AG04449 (cell line): ENCODE measurements at regions of chr9 and their contacts with region 1.

Region 1: GRCh38 chr9:122931226-122932121 is at the start of gene ZBTB26:
- DNase-seq: peak; percentile 50
- H3K4me3 ChIP-seq: peak within 1 kb of the TSS; percentile 96
- CTCF ChIP-seq: no peak

Region 2: DNA sequence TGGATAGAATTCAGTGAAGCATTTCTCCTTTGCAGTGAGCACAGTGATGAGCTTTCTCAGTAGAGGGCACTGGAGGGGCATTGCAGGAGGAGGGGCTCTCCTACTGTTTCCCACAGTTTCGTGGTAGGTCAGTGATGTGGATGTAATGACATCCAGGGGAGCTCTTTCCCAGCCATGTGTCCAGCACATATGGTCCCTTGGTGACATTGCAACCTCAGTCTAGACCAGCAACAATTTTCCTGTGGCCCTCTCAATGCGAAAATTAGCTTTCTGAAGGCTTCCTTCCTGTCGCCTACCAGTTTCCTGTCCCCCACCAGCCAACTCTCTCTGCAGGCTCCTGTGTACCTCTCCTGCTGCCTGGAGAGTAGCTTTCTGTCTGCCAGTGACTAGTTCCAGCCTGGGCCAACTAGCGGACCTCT is 96.2 kb before region 1 on chr9:
- CTCF ChIA-PET with region 1: no interaction called
- POLR2A ChIA-PET with region 1: no interaction called
- DNase-seq: no peak
- H3K4me3 ChIP-seq: no peak overlapping the region
- CTCF ChIP-seq: no peak

Region 3: GRCh38 chr9:122912964-122913673 is 18.4 kb before region 1 on chr9 and contains the start of gene ZBTB6:
- CTCF ChIA-PET with region 1: interaction called, 4 read pairs
- POLR2A ChIA-PET with region 1: interaction called, 15 read pairs
- DNase-seq: peak; percentile 16
- H3K4me3 ChIP-seq: peak within 1 kb of the TSS; percentile 85
- CTCF ChIP-seq: no peak

Region 4: DNA sequence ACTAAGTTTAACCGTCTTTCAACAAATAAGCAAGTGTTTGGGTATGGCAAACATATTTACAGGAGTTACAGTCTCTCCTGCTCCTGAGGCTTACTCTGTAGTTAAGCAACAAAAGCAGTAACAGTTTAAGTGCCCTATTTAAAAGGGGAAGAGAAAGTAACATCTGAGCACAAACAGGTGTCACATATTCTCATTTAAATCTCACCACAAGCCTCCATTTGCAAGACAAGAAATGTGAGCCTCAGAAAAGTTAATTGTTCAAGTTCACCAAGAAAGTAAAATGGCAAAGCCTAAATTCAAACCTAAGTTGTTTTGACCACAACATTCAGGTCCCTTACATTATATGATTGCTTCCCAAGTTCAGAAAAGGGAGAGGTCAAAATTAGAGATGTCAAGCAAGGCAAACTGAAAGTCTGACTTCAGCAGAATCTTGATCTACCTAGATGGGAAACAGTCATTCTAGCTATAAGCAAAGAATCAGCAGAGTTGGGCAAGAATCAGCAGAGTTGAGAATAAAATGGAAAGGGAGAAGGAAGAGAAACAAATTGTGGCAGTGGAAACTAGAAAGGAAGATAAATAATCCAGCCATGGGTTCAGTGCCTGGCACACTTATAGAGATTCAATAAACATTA is 243.5 kb after region 1 on chr9:
- CTCF ChIA-PET with region 1: no interaction called
- POLR2A ChIA-PET with region 1: no interaction called
- DNase-seq: no peak
- H3K4me3 ChIP-seq: no peak overlapping the region
- CTCF ChIP-seq: no peak

Region 5: GRCh38 chr9:123291736-123292135 is 360.3 kb after region 1 on chr9:
- CTCF ChIA-PET with region 1: no interaction called
- POLR2A ChIA-PET with region 1: no interaction called
- DNase-seq: no peak
- H3K4me3 ChIP-seq: no peak overlapping the region
- CTCF ChIP-seq: no peak